Activated CD4-positive, alpha-beta T cell treated with anti-CD3 and anti-CD28 coated beads, Interleukin-2, amount 10 ng/mL, durations not matched to agents 24 days and 14 days (primary cell): ENCODE measurements at regions of chr4 and their contacts with region 1.

Region 1: GRCh38 chr4:184282251-184282713 is 64.6 kb upstream of the ENPP6 start:
- DNase-seq: peak; percentile 87
- H3K4me3 Mint-ChIP-seq: peak overlapping the region; percentile 66
- H3K27ac Mint-ChIP-seq: peak overlapping the region; percentile 90
- H3K4me1 Mint-ChIP-seq: peaks cover 62% of the 10 kb centered on the region
- H3K27me3 Mint-ChIP-seq: no peaks in the 10 kb centered on the region

Region 2: GRCh38 chr4:183971929-183972490 is 310.3 kb before region 1 on chr4:
- intact Hi-C with region 1: no loop called
- DNase-seq: no peak
- H3K4me3 Mint-ChIP-seq: no peak overlapping the region
- H3K27ac Mint-ChIP-seq: no peak overlapping the region
- H3K4me1 Mint-ChIP-seq: no peaks in the 10 kb centered on the region
- H3K27me3 Mint-ChIP-seq: peaks cover 16% of the 10 kb centered on the region

Region 3: GRCh38 chr4:184255871-184256642 is 26.2 kb before region 1 on chr4:
- intact Hi-C with region 1: no loop called
- DNase-seq: peak; percentile 52
- H3K4me3 Mint-ChIP-seq: no peak overlapping the region
- H3K27ac Mint-ChIP-seq: no peak overlapping the region
- H3K4me1 Mint-ChIP-seq: peaks cover 15% of the 10 kb centered on the region
- H3K27me3 Mint-ChIP-seq: no peaks in the 10 kb centered on the region

Region 4: DNA sequence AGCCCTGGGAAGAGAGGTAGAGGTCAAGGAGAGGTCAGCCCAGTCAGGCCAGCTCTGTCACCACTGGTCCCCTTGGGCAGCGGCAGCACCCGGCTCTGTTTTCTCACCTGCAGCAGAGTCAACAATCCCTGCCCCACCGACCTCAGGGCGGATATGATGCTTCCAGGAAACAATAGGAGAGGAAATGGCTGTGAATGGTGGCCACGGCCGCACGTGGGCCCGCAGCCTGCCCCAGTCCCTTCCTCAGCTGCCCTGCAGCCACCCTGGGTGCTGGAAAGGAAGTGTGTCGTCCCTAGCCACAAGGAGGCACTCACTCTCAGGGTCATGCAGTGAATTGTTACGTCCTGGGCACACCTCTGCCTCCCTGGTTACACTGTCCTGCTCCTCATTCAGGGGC is 27.9 kb after region 1 on chr4:
- intact Hi-C with region 1: loop called (anchors 1 kb)
- DNase-seq: peak; percentile 78
- H3K4me3 Mint-ChIP-seq: peak overlapping the region; percentile 16
- H3K27ac Mint-ChIP-seq: peak overlapping the region; percentile 66
- H3K4me1 Mint-ChIP-seq: peaks cover 65% of the 10 kb centered on the region
- H3K27me3 Mint-ChIP-seq: no peaks in the 10 kb centered on the region

Region 5: DNA sequence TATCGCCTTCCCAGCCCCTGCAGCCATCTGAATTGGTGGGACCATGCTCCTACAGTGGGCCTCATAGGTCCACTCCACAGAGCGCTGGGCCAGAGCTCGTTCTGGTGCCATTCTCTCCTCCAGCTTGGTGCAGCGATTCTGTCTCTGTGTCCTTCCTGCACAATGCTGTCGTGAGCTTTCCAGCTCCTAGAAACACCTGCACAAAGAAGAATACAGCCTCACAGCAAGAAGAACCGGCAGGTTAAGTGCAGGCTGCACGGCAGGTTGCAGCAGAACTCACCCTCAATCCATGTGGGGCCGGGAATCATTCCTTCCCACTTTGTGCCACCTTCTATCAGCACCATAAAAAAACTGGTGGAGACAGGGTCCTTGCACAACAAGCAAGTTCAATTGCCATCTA is 36.6 kb after region 1 on chr4:
- intact Hi-C with region 1: loop called (anchors 1 kb)
- DNase-seq: peak; percentile 56
- H3K4me3 Mint-ChIP-seq: peak overlapping the region; percentile 21
- H3K27ac Mint-ChIP-seq: peak overlapping the region; percentile 93
- H3K4me1 Mint-ChIP-seq: peaks cover 50% of the 10 kb centered on the region
- H3K27me3 Mint-ChIP-seq: no peaks in the 10 kb centered on the region

Region 6: GRCh38 chr4:184583738-184584502 is 301.6 kb after region 1 on chr4:
- intact Hi-C with region 1: loop called (anchors 5 kb)
- DNase-seq: peak; percentile 68
- H3K4me3 Mint-ChIP-seq: peak overlapping the region; percentile 19
- H3K27ac Mint-ChIP-seq: peak overlapping the region; percentile 75
- H3K4me1 Mint-ChIP-seq: peaks cover 23% of the 10 kb centered on the region
- H3K27me3 Mint-ChIP-seq: no peaks in the 10 kb centered on the region